PC-3 (cell line): ENCODE measurements at regions of chr9 and their contacts with region 1.

Region 1: DNA sequence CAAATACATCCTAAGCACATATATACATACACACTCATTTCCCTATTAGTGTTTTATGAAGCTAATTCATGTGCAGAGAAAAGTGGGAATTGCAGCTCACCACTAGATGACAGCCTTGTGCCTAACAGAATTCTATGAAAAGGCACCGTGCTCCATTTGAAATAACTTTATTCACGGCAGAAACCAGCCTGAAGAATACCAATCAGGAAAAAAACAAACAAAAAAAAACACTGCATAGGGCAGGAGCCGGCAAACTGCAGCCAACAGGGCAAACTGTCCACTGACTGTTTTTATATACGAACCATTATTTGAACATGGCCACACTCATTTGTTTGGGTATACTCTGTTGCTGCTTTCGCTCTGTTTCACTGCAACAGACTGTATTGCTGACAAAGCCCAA is 33.6 kb downstream of the ERMP1 start:
- DNase-seq: peak; percentile 75
- ATAC-seq: peak; percentile 72
- H3K4me3 ChIP-seq: no peak overlapping the region
- H3K27ac ChIP-seq: no peak overlapping the region
- H3K4me1 ChIP-seq: peaks cover 18% of the 10 kb centered on the region
- H3K27me3 ChIP-seq: no peaks in the 10 kb centered on the region
- CTCF ChIP-seq: peak; percentile 87

Region 2: GRCh38 chr9:5832543-5833529 is 33.5 kb after region 1 on chr9 and contains the start of gene ERMP1:
- CTCF ChIA-PET with region 1: interaction called, 6 read pairs
- POLR2A ChIA-PET with region 1: no interaction called
- intact Hi-C with region 1: loop called (anchors 1 kb)
- DNase-seq: peak; percentile 80
- ATAC-seq: peak; percentile 88
- H3K4me3 ChIP-seq: peak within 1 kb of the TSS; percentile 95
- H3K27ac ChIP-seq: no peak within 1 kb of the TSS
- H3K4me1 ChIP-seq: peaks cover 16% of the 10 kb centered on the region; the same call in 1 of the 2 replicates
- H3K27me3 ChIP-seq: no peaks in the 10 kb centered on the region
- CTCF ChIP-seq: peak; percentile 76
- total RNA-seq, gene ERMP1: 17.8 and 19.2 TPM in 2 replicates

Region 3: GRCh38 chr9:5869315-5870019 is 70.2 kb after region 1 on chr9:
- CTCF ChIA-PET with region 1: no interaction called
- POLR2A ChIA-PET with region 1: no interaction called
- intact Hi-C with region 1: no loop called
- DNase-seq: peak; percentile 23
- ATAC-seq: no peak; the same call in 1 of the 2 replicates
- H3K4me3 ChIP-seq: no peak overlapping the region
- H3K27ac ChIP-seq: no peak overlapping the region
- H3K4me1 ChIP-seq: no peaks in the 10 kb centered on the region
- H3K27me3 ChIP-seq: no peaks in the 10 kb centered on the region
- CTCF ChIP-seq: peak; percentile 59

Region 4: DNA sequence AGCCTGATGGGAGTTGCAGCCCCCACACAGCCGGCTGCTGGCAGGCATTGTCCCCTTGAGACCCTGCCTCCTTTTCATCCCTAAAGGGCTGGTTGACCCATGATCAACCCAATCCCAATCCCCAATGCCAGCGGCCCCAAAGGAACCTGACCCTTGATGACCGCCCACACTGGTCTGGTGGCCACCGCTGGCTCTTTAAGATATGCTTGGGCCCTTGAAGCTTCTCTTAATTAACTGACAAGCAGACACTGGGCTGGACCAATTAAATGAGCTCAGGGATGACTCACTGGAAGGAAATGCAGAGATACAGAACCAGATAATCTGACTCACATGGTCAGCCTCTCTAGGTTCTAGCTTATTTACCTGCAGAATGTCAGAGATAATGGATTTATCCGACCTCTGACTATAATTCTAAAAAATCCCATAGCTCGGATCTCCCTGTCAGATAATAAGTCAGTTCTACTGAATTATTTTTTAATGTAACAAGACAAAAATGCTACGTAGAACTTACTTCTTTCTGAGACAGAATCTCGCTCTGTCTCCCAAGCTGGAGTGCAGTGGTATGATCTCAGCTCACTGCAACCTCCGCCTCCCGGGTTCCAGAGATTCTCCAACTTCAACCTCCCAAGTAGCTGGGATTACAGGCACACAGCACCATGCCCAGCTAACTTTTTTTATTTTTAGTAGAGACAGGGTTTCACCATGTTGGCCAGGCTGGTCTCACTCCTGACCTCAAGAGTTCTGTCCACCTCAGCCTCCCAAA is 80.3 kb after region 1 on chr9:
- CTCF ChIA-PET with region 1: interaction called, 4 read pairs
- POLR2A ChIA-PET with region 1: interaction called, 4 read pairs
- intact Hi-C with region 1: loop called (anchors 5 kb)
- DNase-seq: peak; percentile 82
- ATAC-seq: peak; percentile 95
- H3K4me3 ChIP-seq: peak overlapping the region; percentile 37; the same call in 1 of the 2 replicates
- H3K27ac ChIP-seq: peak overlapping the region; percentile 54
- H3K4me1 ChIP-seq: peaks cover 26% of the 10 kb centered on the region
- H3K27me3 ChIP-seq: no peaks in the 10 kb centered on the region
- CTCF ChIP-seq: no peak

Region 5: DNA sequence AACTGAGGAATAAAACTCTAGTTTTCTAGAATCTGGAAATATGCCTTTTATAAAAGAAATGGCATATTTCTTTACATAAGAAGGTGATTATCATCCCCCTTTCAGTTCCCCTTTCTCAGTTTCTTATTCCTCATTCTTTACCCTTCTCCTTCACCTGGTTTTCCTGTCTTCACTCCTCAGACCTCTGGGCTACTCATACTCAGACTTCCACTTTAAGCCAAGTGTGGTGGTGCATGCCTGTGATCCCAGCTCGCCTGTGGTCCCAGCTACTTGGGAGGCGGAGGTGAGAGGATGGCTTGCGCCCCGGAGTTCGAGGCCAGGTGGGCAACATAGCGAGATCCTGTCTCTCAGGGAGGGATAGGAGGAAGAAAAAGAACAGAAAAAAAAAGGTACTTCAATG is 159.0 kb after region 1 on chr9:
- CTCF ChIA-PET with region 1: no interaction called
- POLR2A ChIA-PET with region 1: no interaction called
- intact Hi-C with region 1: loop called (anchors 5 kb)
- DNase-seq: no peak
- ATAC-seq: no peak
- H3K4me3 ChIP-seq: no peak overlapping the region
- H3K27ac ChIP-seq: no peak overlapping the region
- H3K4me1 ChIP-seq: peaks cover 5% of the 10 kb centered on the region; the same call in 1 of the 2 replicates
- H3K27me3 ChIP-seq: no peaks in the 10 kb centered on the region
- CTCF ChIP-seq: no peak

Region 6: DNA sequence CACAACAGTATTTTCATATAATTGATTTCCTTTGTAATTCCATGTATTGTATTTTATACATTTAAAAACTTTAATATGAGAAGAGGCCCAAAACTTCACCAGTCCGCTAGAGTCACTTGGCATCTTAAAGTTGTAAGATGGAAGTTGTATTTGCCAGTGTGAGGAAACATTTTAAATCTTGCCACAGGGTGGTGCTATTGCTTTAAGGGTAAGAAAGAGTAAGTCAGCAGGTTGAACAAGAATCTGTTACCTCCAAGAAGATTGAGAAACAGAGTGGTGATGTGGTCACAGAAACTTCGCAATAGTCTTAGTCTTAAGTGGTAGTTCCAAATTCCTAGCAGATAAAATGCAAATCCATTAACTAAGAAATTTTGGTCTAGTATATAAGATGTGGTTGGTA is 255.9 kb after region 1 on chr9:
- CTCF ChIA-PET with region 1: interaction called, 6 read pairs
- POLR2A ChIA-PET with region 1: no interaction called
- intact Hi-C with region 1: loop called (anchors 2 kb)
- DNase-seq: peak; percentile 90
- ATAC-seq: peak; percentile 83
- H3K4me3 ChIP-seq: no peak overlapping the region
- H3K27ac ChIP-seq: peak overlapping the region; percentile 61
- H3K4me1 ChIP-seq: peaks cover 15% of the 10 kb centered on the region
- H3K27me3 ChIP-seq: no peaks in the 10 kb centered on the region
- CTCF ChIP-seq: peak; percentile 66

Region 7: DNA sequence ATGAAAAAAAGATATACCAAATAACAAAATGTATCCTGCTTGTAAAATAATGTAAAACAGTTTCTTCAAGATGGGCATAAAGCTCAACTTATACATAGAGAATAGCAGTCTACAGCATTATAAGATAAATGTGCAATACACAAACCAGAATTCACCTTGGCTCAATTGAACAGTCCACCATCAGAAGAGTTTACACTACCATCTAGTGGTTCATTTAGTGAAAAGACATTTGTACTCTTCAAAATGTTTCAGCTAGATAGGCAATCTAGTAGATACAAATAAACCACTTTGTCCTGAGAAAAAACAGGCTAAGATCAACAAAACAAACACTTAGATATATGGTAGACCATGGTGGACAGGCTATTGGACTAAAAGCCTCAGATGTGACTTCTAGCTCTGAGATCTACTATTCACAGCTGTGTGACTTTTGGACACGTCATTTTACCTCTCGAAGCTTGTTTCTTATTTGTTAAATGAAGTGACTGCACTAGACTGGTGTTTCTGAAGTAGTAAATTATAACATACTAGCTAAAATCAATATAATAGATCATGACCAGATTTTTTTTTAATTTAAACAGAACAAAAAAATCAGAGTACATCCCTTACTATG is 506.7 kb after region 1 on chr9:
- CTCF ChIA-PET with region 1: no interaction called
- POLR2A ChIA-PET with region 1: no interaction called
- intact Hi-C with region 1: loop called (anchors 5 kb)
- DNase-seq: peak; percentile 69
- ATAC-seq: peak; percentile 81
- H3K4me3 ChIP-seq: no peak overlapping the region
- H3K27ac ChIP-seq: peak overlapping the region; percentile 47; the same call in 1 of the 2 replicates
- H3K4me1 ChIP-seq: peaks cover 19% of the 10 kb centered on the region
- H3K27me3 ChIP-seq: no peaks in the 10 kb centered on the region
- CTCF ChIP-seq: peak; percentile 72